Activated CD4-positive, alpha-beta T cell treated with anti-CD3 and anti-CD28 coated beads, Interleukin-2, amount 10 ng/mL, durations not matched to agents 24 days and 14 days (primary cell): ENCODE measurements at regions of chr2 and their contacts with region 1.

Region 1: DNA sequence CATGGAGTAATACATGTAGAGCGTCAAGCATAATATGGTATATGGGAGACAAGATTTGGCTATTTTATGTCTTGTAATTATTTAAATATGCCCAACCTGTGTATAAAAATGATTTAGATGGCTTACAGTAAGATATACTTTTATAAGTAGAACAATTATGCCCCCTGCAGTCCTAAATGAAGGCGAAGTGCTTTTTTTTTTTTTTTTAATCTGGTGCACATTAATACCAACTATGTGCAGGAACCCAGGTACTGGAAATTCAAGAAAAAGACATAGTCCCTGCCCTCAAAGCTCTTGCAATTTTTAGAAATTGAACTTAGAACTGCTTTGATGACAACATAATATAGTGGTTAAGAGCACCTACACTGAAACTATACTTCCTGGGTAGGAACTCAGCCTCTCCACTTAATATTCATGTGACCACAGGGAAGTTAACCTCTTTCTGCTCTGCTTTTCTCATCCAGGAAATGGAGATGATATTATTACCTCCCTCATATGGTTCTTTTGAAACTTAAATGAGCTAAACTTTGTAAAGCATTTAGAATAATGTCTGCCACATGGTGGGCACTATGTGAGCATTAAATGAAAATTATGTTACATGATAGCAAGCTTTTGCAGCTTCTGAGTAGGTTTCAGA is 38.1 kb downstream of the AFTPH start:
- DNase-seq: no peak
- H3K4me3 Mint-ChIP-seq: no peak overlapping the region
- H3K27ac Mint-ChIP-seq: no peak overlapping the region
- H3K4me1 Mint-ChIP-seq: peaks cover 30% of the 10 kb centered on the region
- H3K27me3 Mint-ChIP-seq: no peaks in the 10 kb centered on the region

Region 2: GRCh38 chr2:63310614-63311013 is 1251.7 kb before region 1 on chr2:
- intact Hi-C with region 1: no loop called
- DNase-seq: no peak
- H3K4me3 Mint-ChIP-seq: no peak overlapping the region
- H3K27ac Mint-ChIP-seq: no peak overlapping the region
- H3K4me1 Mint-ChIP-seq: no peaks in the 10 kb centered on the region
- H3K27me3 Mint-ChIP-seq: no peaks in the 10 kb centered on the region

Region 3: DNA sequence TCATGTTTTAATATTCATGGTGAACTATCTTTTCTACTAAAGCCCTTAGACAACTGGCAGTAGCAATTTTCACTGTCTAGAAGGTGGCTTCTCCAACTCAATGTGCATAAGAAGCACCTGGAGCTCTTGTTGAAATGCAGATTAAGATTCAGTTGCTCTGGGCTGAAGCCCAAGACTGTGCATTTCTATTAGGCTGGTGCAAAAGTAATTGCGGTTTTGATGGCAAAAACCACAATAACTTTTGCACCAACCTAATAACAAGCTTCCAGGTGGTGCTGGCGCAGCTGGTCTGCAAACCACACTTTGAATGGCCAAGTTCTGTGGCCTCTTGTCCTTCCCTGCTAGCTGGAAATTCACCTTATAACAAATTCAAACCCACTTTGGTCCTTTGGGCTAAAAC is 516.3 kb before region 1 on chr2:
- intact Hi-C with region 1: loop called (anchors 5 kb)
- DNase-seq: no peak
- H3K4me3 Mint-ChIP-seq: no peak overlapping the region
- H3K27ac Mint-ChIP-seq: no peak overlapping the region
- H3K4me1 Mint-ChIP-seq: peaks cover 10% of the 10 kb centered on the region
- H3K27me3 Mint-ChIP-seq: no peaks in the 10 kb centered on the region

Region 4: DNA sequence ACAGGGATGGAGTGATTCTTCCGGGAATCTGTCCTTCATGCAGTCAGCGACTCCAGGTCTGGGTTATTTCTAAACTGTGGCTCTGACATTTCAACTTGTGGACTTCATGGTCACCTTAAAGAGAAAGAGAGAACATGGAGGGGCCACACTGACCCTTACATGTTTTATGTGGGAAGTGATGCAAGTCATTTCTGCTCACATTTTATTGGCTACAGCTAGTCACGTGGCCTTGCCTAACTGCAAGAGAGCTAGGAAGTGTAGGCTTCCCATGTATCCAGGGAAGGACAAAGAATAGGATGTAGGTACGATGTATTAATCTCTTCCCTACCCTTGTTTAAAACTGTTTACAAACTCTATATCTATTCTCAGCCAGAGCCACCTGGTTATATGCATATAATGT is 68.5 kb before region 1 on chr2:
- intact Hi-C with region 1: no loop called
- DNase-seq: no peak
- H3K4me3 Mint-ChIP-seq: no peak overlapping the region
- H3K27ac Mint-ChIP-seq: no peak overlapping the region
- H3K4me1 Mint-ChIP-seq: peaks cover 7% of the 10 kb centered on the region
- H3K27me3 Mint-ChIP-seq: peaks cover 40% of the 10 kb centered on the region

Region 5: GRCh38 chr2:64538764-64539433 is 23.4 kb before region 1 on chr2:
- intact Hi-C with region 1: loop called (anchors 2 kb)
- DNase-seq: no peak
- H3K4me3 Mint-ChIP-seq: peak overlapping the region; percentile 38
- H3K27ac Mint-ChIP-seq: peak overlapping the region; percentile 47
- H3K4me1 Mint-ChIP-seq: peaks cover 50% of the 10 kb centered on the region
- H3K27me3 Mint-ChIP-seq: no peaks in the 10 kb centered on the region

Region 6: GRCh38 chr2:64666810-64667438 is 104.7 kb after region 1 on chr2:
- intact Hi-C with region 1: no loop called
- DNase-seq: peak; percentile 71
- H3K4me3 Mint-ChIP-seq: peak overlapping the region; percentile 69
- H3K27ac Mint-ChIP-seq: peak overlapping the region; percentile 92
- H3K4me1 Mint-ChIP-seq: peaks cover 36% of the 10 kb centered on the region
- H3K27me3 Mint-ChIP-seq: no peaks in the 10 kb centered on the region